GM18951 (cell line): ENCODE measurements at regions of chr3 and their contacts with region 1.

Region 1: DNA sequence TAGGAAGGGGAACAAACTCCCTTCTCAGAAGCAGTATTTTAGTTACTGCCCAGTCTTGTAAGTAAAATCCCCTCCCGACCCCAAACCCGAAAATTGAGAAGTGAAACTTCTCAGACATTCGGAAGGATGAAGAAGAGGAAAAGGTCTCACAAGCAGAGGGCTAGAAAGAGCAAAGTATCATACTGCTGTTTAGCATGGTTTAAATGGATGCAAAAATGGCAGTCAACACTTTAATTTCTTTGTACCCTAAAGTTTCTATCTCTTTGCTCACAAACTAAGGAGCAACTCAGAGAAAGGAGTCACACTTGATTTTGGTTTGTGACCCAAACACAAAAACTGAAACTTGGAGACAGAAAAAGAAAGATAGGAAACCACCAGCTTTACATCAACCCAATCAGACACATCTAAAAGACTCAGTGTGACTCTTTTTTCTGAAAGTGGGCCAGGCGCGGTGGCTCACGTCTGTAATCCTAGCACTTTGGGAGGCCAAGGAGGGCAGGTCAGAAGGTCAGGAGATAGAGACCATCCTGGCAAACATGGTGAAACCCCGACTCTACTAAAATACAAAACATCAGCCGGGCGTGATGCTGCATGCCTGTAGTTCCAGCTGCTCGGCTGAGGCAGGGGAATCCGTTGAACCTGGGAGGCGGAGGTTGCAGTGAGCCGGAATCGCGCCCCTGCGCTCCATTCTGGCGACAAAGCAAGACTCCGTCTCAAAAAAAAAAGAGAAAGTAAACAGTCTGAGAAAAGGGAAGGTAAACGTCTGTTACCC is 63.2 kb upstream of the ATP11B start:
- POLR2A ChIP-seq: no peak

Region 2: DNA sequence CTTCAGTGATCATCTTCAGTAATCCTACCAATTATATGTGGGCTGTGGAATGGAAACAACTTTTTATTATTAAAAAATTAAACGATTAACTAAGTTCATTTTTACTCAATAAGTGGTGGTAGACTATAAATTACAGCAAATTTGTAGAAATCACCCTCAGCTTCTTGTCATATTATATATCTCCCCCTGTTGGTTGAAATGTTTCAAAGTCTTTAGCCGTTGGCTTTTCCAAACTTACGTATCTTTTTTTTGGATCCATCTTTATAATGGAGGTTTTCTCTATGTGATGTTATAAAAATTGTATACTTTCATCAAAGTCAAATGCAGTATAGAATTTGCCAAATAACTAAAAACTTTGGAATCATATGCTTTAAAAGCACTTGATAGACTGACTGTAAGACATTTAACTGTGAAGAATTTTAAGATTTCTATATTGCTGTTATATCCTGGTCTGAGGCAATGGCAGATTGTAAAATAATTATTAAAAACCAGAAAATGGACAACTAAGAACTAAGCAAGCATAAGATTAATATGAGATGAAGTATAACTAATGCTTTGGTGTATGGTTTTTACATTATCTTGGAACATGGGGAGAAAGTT is 107.9 kb after region 1 on chr3:
- in situ Hi-C with region 1: loop called (anchors 10 kb)
- POLR2A ChIP-seq: no peak